Activated T-helper 2 cell treated with anti-CD3 and anti-CD28 coated beads, Interferon-gamma antibody, Interleukin-2, Interleukin-4, amounts not matched to agents 10 μg/mL and 5 μg/mL and 100 μg/mL, durations not matched to agents 14 hours and 24 hours and 36 hours (primary cell): ENCODE measurements at regions of chr6 and their contacts with region 1.

Region 1: DNA sequence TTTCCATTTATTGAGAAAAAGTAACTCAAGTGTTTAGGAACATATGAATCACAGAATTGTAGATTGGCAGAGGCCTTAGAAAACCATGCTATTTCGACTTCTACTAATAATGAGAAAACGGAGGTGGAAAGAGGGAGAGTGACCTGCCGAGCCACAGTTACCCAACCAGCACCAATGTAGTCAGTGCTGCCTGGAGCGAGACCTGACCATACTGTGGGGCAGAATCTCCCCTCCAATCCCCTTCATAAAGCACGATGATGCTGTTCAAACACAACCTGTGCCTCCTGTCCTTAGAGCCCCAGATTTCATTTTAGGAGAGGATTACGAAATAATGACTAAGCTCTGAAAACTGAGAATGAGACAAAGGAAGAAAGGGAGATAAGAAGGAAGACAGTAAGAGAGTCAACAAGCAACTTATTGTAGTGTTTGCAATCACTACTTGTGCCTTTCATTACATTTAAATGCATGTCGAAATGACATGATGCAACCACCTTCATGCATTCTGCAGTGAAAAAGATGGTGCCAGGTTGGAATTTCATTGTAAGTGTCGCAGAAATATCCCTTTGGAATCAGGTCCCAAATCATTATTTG is 70.6 kb downstream of the ATXN1 start:
- DNase-seq: no peak
- H3K4me3 Mint-ChIP-seq: peak overlapping the region; percentile 51
- H3K27ac Mint-ChIP-seq: peak overlapping the region; percentile 93
- H3K4me1 Mint-ChIP-seq: peaks cover 76% of the 10 kb centered on the region
- H3K27me3 Mint-ChIP-seq: no peaks in the 10 kb centered on the region

Region 2: DNA sequence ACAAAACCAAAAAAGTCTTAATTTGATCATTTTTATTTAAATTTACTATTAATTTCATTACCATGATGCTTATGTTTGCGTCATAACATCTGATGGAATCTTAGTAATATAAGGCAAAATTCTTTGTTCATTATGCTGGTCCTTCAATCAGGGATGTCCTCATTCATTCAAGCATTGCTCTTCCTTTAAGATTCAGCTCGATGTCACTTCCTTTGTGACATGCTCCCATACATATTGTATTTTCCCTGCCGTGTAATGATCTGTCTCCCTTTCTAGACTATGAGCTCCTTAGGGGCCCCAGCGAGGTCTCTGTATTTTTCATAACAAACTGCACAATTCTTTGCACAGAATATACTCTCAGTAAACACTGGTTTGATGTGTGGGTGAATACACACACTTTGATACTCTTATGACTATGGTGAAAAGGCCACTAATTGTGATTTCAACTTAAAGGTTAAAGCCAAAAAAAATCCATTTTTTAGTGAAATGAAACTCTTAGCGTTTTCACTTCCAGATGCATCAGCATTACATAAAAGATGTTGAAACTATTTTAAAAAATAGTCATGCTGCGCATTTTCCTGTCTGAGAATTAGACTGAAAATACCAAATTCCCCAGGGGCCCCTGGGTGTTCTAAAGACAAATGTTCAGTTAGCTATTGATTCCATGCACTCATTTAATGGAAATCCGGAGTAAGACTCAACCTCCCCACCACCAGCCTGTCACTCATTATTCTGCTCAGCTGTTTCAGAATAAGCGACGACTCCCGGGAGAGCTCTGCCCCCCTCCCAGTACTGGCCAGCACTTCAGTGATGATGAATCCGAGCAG is 99.1 kb before region 1 on chr6:
- intact Hi-C with region 1: loop called (anchors 5 kb)
- DNase-seq: no peak
- H3K4me3 Mint-ChIP-seq: no peak overlapping the region
- H3K27ac Mint-ChIP-seq: peak overlapping the region; percentile 61
- H3K4me1 Mint-ChIP-seq: peaks cover 21% of the 10 kb centered on the region
- H3K27me3 Mint-ChIP-seq: no peaks in the 10 kb centered on the region

Region 3: GRCh38 chr6:16704401-16705045 is 13.8 kb after region 1 on chr6:
- intact Hi-C with region 1: loop called (anchors 1 kb)
- DNase-seq: peak; percentile 49
- H3K4me3 Mint-ChIP-seq: peak overlapping the region; percentile 79
- H3K27ac Mint-ChIP-seq: peak overlapping the region; percentile 92
- H3K4me1 Mint-ChIP-seq: peaks cover 64% of the 10 kb centered on the region
- H3K27me3 Mint-ChIP-seq: no peaks in the 10 kb centered on the region

Region 4: DNA sequence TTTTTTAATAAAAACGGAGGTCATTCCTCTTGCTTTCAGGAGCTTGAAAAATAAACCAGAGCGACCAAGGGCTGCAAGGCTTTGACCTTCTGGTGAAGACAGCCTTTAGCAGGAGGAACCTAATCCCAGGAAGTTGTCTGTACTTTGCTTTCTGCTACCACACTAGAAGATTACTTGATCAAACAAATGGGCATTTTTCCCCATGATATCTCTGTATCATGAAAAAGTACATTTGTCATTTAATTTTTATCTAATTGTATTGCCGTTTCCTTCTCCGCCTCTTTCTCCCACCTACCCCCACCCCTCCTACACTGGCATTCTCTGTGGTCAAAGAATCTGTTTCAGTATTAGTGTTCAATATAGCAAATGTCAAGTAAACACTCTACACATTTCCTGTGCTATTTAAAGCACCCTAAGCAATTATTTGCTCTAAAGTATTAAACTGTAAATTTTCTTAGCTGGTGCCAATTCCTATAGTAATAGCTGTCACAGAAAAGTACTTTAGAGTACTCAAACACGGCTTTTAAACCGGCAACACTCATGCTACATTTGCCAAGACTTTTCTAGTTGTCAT is 40.9 kb after region 1 on chr6:
- intact Hi-C with region 1: loop called (anchors 1 kb)
- DNase-seq: peak; percentile 48
- H3K4me3 Mint-ChIP-seq: peak overlapping the region; percentile 65
- H3K27ac Mint-ChIP-seq: peak overlapping the region; percentile 91
- H3K4me1 Mint-ChIP-seq: peaks cover 60% of the 10 kb centered on the region
- H3K27me3 Mint-ChIP-seq: no peaks in the 10 kb centered on the region